OCI-LY7 (cell line): ENCODE measurements at regions of chr2 and their contacts with region 1.

Region 1: DNA sequence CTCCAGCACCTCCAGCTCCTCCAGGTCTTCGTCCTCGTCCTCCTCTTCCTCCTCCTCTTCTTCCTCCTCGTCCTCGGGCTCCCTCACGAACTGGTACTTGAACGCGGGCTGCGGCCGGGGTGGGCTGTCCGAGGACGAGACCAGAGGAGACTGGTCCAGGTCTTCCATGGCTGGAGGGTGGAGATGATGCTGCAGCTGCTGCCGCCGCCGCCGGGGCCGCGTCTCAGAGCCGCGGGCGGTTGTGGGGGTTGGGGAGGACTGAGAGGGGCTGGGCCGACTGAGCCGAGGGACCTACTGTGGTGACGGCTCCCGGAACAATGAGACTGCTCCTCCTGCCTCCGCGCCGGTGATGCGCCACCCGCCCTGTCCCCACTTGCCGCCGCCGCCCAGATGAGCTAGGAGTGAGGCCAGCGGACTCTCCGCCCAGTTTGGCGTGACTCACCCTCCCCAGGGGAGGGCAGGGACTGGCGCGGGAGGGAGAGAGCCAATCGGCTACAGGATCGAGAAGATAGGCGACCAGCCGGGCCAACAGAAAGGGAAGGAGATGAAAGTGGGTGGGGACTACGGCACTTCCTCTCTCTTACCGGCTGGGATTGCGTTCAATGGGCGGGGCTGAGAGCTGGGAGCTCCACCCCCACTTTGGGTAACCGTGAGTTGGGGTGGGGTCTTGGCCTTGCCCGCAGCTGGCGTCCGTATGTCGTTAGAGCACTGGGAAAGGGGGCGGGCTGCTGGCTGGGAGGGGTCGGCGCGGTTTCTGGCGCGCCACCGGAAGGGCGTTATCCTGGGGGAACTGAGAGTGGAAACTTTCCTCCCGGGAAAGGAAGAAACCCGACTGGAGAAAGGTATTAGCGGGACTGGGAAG is at the start of gene RTN4:
- DNase-seq: peak; percentile 99
- H3K4me3 ChIP-seq: peak within 1 kb of the TSS; percentile 75
- H3K27ac ChIP-seq: peak within 1 kb of the TSS; percentile 89
- H3K4me1 ChIP-seq: peaks cover 55% of the 10 kb centered on the region
- CTCF ChIP-seq: no peak
- total RNA-seq, gene RTN4: 27.5 and 36.5 TPM in 2 replicates

Region 2: GRCh38 chr2:54838585-54839035 is 211.8 kb before region 1 on chr2:
- CTCF ChIA-PET with region 1: no interaction called
- POLR2A ChIA-PET with region 1: no interaction called
- intact Hi-C with region 1: no loop called
- DNase-seq: peak; percentile 82
- H3K4me3 ChIP-seq: no peak overlapping the region
- H3K27ac ChIP-seq: peak overlapping the region; percentile 35
- H3K4me1 ChIP-seq: peaks cover 24% of the 10 kb centered on the region
- CTCF ChIP-seq: peak; percentile 98

Region 3: DNA sequence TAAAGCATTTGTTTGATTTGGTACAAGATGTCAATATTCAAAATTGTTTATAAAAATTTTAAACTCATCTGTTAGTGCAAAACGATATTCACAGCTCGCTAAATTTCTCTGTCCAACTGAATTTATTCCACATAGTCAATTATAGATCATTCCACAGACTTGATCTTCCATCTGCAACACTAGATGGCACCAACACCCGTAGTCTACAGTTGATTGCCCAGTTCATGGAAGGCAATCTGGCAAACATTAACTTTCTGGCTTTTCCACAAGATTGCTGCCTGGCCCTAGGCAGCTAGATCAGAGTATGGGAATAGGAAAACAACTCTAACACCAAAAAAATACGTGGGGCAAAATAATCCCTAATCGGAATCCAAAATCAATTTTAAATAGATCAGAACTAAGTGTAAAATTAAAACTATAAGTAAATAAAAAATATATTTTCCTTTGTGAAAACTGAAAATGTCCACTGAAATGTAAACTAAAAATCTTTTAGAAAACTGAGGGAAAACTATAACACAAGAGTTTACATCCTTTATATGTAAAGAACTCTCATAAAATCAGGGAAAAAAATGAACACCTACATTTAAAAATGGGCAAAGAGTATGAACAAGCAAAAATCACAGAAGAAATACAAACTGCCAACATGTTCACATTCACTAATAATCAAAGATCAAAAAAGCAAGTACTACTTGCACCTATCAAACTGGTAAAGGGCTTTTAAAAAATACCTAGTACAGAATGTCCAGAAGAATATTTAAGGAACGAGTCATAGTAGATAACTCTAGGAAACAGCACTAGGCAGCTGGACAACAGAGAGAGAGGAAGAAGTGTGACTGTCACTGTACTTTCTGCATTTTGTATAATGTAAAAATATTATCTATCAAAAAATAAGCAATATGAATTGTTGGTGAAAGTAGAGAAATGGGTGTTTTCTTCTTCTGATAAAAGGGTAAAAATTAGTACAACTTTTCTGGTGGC is 35.1 kb before region 1 on chr2:
- CTCF ChIA-PET with region 1: no interaction called
- POLR2A ChIA-PET with region 1: interaction called, 8 read pairs
- intact Hi-C with region 1: loop called (anchors 1 kb)
- DNase-seq: peak; percentile 71
- H3K4me3 ChIP-seq: no peak overlapping the region
- H3K27ac ChIP-seq: no peak overlapping the region
- H3K4me1 ChIP-seq: peaks cover 46% of the 10 kb centered on the region
- CTCF ChIP-seq: peak; percentile 93

Region 4: GRCh38 chr2:55026202-55026601 is 24.2 kb before region 1 on chr2:
- CTCF ChIA-PET with region 1: interaction called, 3 read pairs
- POLR2A ChIA-PET with region 1: interaction called, 18 read pairs
- intact Hi-C with region 1: loop called (anchors 1 kb)
- DNase-seq: peak; percentile 48
- H3K4me3 ChIP-seq: peak overlapping the region; percentile 54
- H3K27ac ChIP-seq: peak overlapping the region; percentile 76
- H3K4me1 ChIP-seq: peaks cover 48% of the 10 kb centered on the region
- CTCF ChIP-seq: no peak

Region 5: DNA sequence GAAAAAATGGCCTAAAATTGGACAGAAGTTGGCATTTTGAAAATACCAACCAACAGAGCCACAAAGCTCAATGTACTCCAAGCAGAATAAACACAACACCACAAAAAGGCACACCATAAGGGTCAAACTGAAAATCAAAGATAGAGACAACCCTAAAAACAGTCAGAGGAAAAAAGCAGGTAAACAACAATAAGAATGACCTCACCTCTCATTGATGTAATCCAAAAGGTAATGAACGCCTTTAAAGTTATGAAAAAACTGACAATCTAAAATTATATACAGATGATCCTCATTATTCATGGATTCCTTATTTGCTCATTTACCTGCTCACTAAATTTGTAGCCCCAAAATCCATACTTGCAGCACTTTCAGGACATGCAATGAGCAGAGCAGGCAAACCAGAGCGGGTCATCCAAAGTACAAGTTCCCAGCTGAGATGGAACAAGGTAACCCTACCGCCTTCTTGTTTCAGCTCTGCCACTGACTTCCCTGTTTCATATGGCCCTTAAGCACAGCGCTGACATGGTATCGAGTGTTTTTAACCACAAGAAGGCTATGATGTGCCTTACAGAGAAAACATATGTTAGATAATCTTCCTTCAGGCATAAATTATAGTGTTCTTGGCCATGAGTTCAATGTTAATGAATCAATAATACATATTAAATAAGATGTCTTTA is 17.2 kb before region 1 on chr2:
- CTCF ChIA-PET with region 1: interaction called, 3 read pairs
- POLR2A ChIA-PET with region 1: interaction called, 10 read pairs
- intact Hi-C with region 1: no loop called
- DNase-seq: peak; percentile 56
- H3K4me3 ChIP-seq: no peak overlapping the region
- H3K27ac ChIP-seq: no peak overlapping the region
- H3K4me1 ChIP-seq: peaks cover 23% of the 10 kb centered on the region
- CTCF ChIP-seq: no peak

Region 6: GRCh38 chr2:55038428-55038827 is 11.9 kb before region 1 on chr2:
- CTCF ChIA-PET with region 1: interaction called, 7 read pairs
- POLR2A ChIA-PET with region 1: interaction called, 16 read pairs
- intact Hi-C with region 1: no loop called
- DNase-seq: peak; percentile 16
- H3K4me3 ChIP-seq: no peak overlapping the region
- H3K27ac ChIP-seq: no peak overlapping the region
- H3K4me1 ChIP-seq: peaks cover 19% of the 10 kb centered on the region
- CTCF ChIP-seq: no peak

Region 7: DNA sequence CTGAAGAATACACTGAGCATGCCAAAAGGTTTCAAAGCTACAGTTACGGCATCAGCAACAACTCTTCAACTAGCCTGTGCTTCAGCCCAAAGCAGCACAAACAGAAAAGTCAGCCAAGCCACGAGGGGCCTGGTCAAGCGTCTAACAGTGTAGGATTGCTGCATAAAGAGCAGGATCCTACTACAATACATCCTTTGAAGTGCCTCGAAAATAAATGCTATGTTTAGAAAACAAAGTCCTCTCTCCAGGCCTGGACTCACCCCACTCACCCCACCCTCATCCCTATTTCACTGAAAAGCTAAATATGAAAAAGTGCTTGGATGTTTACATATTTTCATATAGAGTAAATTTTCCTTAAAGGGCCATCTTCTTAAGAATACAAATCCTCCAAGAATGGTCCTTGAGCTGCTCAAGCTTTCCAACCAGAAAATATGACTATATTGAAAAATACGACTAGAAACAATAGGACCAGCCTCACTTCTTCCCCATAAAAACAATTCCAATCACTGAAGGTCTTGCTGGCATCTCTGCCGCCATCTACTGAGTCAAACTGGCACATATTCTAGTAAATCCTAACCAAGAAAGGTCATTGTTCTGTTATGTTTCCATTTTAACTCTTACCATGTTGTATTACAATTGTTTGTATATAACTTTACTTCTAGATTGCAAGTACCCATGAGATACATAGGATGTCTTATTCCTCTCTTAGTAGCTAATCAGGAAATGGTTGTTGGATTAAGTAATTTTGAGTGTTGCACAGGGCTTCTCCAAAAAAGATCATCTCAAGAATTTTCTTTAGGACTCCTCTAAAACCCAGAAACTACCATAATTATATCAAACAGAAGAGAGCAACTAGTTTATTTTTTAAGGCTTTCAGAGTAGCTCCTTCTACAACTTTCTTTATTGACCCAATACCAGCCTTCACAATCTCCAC is 118.1 kb after region 1 on chr2:
- CTCF ChIA-PET with region 1: interaction called, 3 read pairs
- POLR2A ChIA-PET with region 1: interaction called, 7 read pairs
- intact Hi-C with region 1: loop called (anchors 1 kb)
- DNase-seq: peak; percentile 72
- H3K4me3 ChIP-seq: no peak overlapping the region
- H3K27ac ChIP-seq: no peak overlapping the region
- H3K4me1 ChIP-seq: no peaks in the 10 kb centered on the region
- CTCF ChIP-seq: peak; percentile 96